B cell (primary cell): ENCODE measurements at regions of chr4 and their contacts with region 1.

Region 1: GRCh38 chr4:2910409-2910808 is 52.8 kb downstream of the NOP14 start:
- DNase-seq: no peak
- ATAC-seq: peak; percentile 45
- H3K4me3 ChIP-seq: no peak overlapping the region
- H3K4me3 Mint-ChIP-seq: no peak overlapping the region
- H3K27ac ChIP-seq: peak overlapping the region in 1 of 2 donors; percentile 23
- H3K27ac Mint-ChIP-seq: peak overlapping the region; percentile 1
- H3K4me1 ChIP-seq: no peaks in the 10 kb centered on the region
- H3K4me1 Mint-ChIP-seq: peaks cover 9% of the 10 kb centered on the region
- H3K27me3 ChIP-seq: no peaks in the 10 kb centered on the region
- H3K27me3 Mint-ChIP-seq: no peaks in the 10 kb centered on the region
- CTCF ChIP-seq: no peak

Region 2: GRCh38 chr4:2923141-2923551 is 12.7 kb after region 1 on chr4:
- CTCF ChIA-PET with region 1: interaction called, 11 read pairs
- POLR2A ChIA-PET with region 1: interaction called, 3 read pairs
- intact Hi-C with region 1: no loop called
- DNase-seq: no peak
- ATAC-seq: no peak
- H3K4me3 ChIP-seq: no peak overlapping the region
- H3K4me3 Mint-ChIP-seq: peak overlapping the region; percentile 46
- H3K27ac ChIP-seq: peak overlapping the region; percentile 6 to 49
- H3K27ac Mint-ChIP-seq: peak overlapping the region; percentile 79
- H3K4me1 ChIP-seq: peaks cover 23 to 33% of the 10 kb centered on the region in 2 donors
- H3K4me1 Mint-ChIP-seq: peaks cover 56% of the 10 kb centered on the region
- H3K27me3 ChIP-seq: no peaks in the 10 kb centered on the region
- H3K27me3 Mint-ChIP-seq: no peaks in the 10 kb centered on the region
- CTCF ChIP-seq: no peak